MCF 10A (cell line): ENCODE measurements at regions of chr17 and their contacts with region 1.

Region 1: GRCh38 chr17:73657473-73658116 is 13.3 kb upstream of the SDK2 start:
- DNase-seq: peak; percentile 68
- H3K4me3 Mint-ChIP-seq: no peak overlapping the region
- H3K27ac Mint-ChIP-seq: no peak overlapping the region
- H3K4me1 Mint-ChIP-seq: no peaks in the 10 kb centered on the region
- H3K27me3 Mint-ChIP-seq: peaks cover 79% of the 10 kb centered on the region
- CTCF ChIP-seq: peak; percentile 64

Region 2: GRCh38 chr17:72942579-72942978 is 715.0 kb before region 1 on chr17:
- CTCF ChIA-PET with region 1: no interaction called
- POLR2A ChIA-PET with region 1: no interaction called
- intact Hi-C with region 1: no loop called
- DNase-seq: no peak
- H3K4me3 Mint-ChIP-seq: no peak overlapping the region
- H3K27ac Mint-ChIP-seq: no peak overlapping the region
- H3K4me1 Mint-ChIP-seq: no peaks in the 10 kb centered on the region
- H3K27me3 Mint-ChIP-seq: no peaks in the 10 kb centered on the region
- CTCF ChIP-seq: no peak

Region 3: DNA sequence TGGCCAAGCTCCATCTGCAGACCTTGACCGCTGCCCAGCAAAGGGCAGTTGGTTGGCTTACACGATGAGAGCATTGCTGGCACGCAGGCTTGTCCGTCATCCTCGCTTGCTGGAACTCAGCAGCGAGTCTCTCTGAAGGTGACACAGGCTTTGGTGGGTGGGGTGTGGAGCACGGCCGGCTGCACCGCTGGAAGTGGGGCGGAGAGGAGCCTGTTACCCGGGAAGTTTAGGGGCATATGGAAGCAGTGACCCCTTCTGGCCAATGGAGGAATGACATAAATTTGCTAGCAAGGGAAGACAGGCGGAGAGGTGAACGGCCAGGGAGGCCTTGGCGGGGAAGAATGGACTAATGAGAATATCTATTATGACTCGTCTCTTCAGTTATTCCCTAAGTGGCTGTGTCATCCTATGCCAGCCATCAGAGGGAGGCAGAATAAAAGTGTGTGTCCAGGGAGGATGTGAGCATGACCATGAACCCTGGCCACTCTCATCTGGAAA is 52.5 kb after region 1 on chr17:
- CTCF ChIA-PET with region 1: no interaction called
- POLR2A ChIA-PET with region 1: no interaction called
- intact Hi-C with region 1: loop called (anchors 2 kb)
- DNase-seq: peak; percentile 56
- H3K4me3 Mint-ChIP-seq: no peak overlapping the region
- H3K27ac Mint-ChIP-seq: no peak overlapping the region
- H3K4me1 Mint-ChIP-seq: no peaks in the 10 kb centered on the region
- H3K27me3 Mint-ChIP-seq: peaks cover 37% of the 10 kb centered on the region
- CTCF ChIP-seq: peak; percentile 82

Region 4: GRCh38 chr17:73841431-73842060 is 184.0 kb after region 1 on chr17:
- CTCF ChIA-PET with region 1: no interaction called
- POLR2A ChIA-PET with region 1: no interaction called
- intact Hi-C with region 1: loop called (anchors 1 kb)
- DNase-seq: peak; percentile 30
- H3K4me3 Mint-ChIP-seq: no peak overlapping the region
- H3K27ac Mint-ChIP-seq: no peak overlapping the region
- H3K4me1 Mint-ChIP-seq: no peaks in the 10 kb centered on the region
- H3K27me3 Mint-ChIP-seq: peaks cover 11% of the 10 kb centered on the region
- CTCF ChIP-seq: peak; percentile 83

Region 5: DNA sequence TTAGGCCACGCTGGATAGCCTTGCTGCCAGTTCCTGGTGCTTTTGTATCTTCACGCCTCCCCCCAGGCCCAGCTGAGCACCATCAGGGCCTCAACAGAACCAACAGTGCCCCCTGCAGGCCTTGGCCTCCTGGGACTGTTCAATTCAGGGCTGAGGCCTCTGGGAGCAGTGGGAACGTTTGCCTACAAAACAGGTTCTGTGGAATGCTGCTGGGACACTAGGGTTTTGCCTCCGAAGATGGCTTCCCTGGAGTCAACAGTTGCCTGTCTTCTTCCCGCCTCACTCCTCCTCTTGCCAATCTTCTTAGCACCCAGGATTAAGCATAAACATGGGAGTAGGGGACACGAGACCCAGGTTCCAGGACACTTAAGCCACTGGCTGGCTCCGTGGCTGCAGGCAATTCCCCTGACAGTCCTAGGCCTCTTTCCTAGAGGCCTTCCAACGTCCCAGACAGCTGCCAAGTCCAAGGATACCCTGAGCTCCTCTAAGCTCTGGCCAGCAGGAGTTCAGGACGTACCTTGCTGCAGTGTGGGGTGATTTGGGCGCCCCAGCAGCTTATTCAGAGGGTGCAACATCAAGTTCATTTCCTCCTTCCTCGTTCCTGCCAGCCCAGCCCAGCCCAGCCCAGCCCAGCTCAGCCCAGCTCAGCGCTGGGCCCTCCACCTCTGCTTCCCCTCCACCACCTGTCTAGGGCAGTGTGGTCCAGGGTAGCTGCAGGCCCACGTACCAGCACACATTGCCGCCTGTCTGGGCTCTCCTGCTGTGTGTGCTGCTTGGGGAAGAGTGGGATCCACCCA is 299.3 kb after region 1 on chr17:
- CTCF ChIA-PET with region 1: no interaction called
- POLR2A ChIA-PET with region 1: no interaction called
- intact Hi-C with region 1: loop called (anchors 2 kb)
- DNase-seq: peak; percentile 62
- H3K4me3 Mint-ChIP-seq: no peak overlapping the region
- H3K27ac Mint-ChIP-seq: no peak overlapping the region
- H3K4me1 Mint-ChIP-seq: no peaks in the 10 kb centered on the region
- H3K27me3 Mint-ChIP-seq: peaks cover 26% of the 10 kb centered on the region
- CTCF ChIP-seq: peak; percentile 48

Region 6: DNA sequence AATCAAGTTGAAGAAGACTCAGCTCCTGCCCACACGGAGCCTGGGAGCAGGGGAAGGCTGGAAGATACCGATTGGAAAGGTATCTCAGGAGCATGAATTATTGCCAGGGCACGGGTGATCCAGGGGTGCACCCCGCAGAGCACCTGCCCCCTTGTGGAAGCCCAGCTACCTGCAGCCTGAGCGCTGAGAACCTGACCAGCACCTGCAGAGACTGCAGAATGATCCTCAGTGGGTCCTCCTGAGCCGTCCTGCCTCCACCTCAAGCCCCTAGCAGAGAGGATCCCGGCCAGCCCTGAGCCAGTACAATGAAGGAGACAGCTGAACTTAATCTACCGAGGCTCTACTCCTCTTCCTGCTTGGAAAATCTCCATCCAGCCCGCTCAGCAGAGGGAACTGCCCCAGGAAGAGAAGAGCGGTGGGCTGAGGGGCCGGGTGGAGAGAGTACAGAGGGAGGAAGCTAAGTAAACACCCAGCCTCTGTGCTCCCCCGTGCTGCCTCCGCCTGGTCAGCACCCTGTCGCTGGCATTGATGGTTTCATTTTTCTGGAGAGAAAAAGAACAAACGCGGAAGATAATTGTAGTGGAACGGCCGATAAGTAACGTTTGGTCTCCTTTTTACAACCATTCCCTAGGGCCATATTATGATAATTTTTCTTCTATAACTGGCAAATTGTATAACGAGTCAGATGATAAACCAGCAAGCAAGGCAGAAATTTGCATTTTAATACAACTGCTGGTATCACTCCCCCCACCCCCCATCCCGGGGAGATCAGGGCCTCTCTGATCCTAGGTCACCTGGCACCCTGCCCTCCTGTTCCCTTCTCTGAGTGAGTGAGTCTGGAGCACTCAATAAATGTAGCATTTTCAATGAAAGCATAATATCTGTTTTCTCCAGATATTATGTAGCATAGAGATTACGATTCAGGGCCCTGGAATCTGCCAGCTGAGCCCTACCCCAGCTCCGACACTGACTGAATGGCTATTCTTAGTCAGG is 341.4 kb after region 1 on chr17:
- CTCF ChIA-PET with region 1: no interaction called
- POLR2A ChIA-PET with region 1: no interaction called
- intact Hi-C with region 1: loop called (anchors 1 kb)
- DNase-seq: peak; percentile 51
- H3K4me3 Mint-ChIP-seq: no peak overlapping the region
- H3K27ac Mint-ChIP-seq: no peak overlapping the region
- H3K4me1 Mint-ChIP-seq: no peaks in the 10 kb centered on the region
- H3K27me3 Mint-ChIP-seq: peaks cover 37% of the 10 kb centered on the region
- CTCF ChIP-seq: peak; percentile 85

Region 7: GRCh38 chr17:74176546-74177001 is 519.0 kb after region 1 on chr17:
- CTCF ChIA-PET with region 1: no interaction called
- POLR2A ChIA-PET with region 1: no interaction called
- intact Hi-C with region 1: loop called (anchors 10 kb)
- DNase-seq: peak; percentile 67
- H3K4me3 Mint-ChIP-seq: no peak overlapping the region
- H3K27ac Mint-ChIP-seq: no peak overlapping the region
- H3K4me1 Mint-ChIP-seq: peaks cover 6% of the 10 kb centered on the region
- H3K27me3 Mint-ChIP-seq: peaks cover 64% of the 10 kb centered on the region
- CTCF ChIP-seq: peak; percentile 89